Activated CD8-positive, alpha-beta memory T cell treated with anti-CD3 and anti-CD28 coated beads, Interleukin-2, amount 10 ng/mL, durations not matched to agents 7 days and 5 days (primary cell): ENCODE measurements at regions of chr1 and their contacts with region 1.

Region 1: GRCh38 chr1:202154766-202155477 is 5.5 kb downstream of the PTPN7 start:
- DNase-seq: peak; percentile 74
- ATAC-seq: peak; percentile 49
- H3K4me3 Mint-ChIP-seq: no peak overlapping the region
- H3K27ac Mint-ChIP-seq: peak overlapping the region; percentile 8
- H3K4me1 Mint-ChIP-seq: peaks cover 62% of the 10 kb centered on the region
- H3K27me3 Mint-ChIP-seq: no peaks in the 10 kb centered on the region

Region 2: DNA sequence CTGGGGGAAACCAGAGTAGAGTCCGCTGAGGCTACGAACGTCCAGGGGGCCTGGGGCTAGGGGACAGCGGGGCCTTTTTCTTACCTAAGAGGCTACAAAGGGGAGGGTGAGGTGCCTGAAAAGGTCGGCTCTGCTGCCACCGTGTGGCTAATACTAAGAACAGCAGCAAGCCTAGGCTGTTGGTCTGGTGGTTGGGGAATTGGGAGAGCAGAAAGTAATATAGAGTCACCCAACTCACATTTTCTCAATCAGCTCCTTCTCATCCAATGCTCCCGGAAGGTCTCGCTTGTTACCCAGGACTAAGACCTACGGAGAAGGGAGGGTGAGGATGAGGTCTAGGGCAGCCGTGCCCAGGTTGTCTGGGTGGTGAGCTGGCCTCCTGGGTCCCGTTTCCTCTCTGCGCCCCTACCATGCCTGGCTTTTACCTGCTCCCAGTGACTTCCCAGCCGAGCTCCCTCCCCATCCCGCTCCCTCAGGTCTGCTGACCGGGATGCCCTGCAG is 19.7 kb before region 1 on chr1:
- CTCF ChIA-PET with region 1: interaction called, 13 read pairs
- DNase-seq: peak; percentile 64
- ATAC-seq: peak; percentile 87
- H3K4me3 Mint-ChIP-seq: no peak overlapping the region
- H3K27ac Mint-ChIP-seq: no peak overlapping the region
- H3K4me1 Mint-ChIP-seq: peaks cover 4% of the 10 kb centered on the region
- H3K27me3 Mint-ChIP-seq: no peaks in the 10 kb centered on the region

Region 3: GRCh38 chr1:202144402-202145067 is 10.4 kb before region 1 on chr1 and contains the start of gene ARL8A:
- CTCF ChIA-PET with region 1: interaction called, 24 read pairs
- DNase-seq: peak; percentile 79
- ATAC-seq: peak; percentile 84
- H3K4me3 Mint-ChIP-seq: peak within 1 kb of the TSS; percentile 85
- H3K27ac Mint-ChIP-seq: peak within 1 kb of the TSS; percentile 90
- H3K4me1 Mint-ChIP-seq: peaks cover 41% of the 10 kb centered on the region
- H3K27me3 Mint-ChIP-seq: no peaks in the 10 kb centered on the region
- total RNA-seq, gene ARL8A: 50.0 to 68.9 TPM

Region 4: DNA sequence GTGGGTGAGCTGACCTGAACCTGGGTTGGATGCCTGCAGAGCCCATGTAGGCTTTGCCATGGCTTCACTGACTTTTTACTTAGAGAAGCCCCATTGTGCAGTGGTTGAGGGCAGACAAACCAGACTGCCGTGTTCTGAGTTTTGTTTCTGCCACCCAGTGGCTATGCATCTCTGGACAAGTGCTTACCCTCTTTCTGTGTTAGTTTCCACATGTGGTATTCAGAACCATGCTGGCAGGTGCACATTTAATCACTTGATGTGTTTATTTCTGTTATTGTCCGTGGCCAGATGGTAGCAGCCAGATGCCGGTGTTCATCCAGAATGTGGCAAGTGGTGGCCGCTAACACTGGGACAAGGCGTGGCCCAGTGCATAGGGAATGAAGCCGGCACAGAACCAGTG is 15.8 kb after region 1 on chr1:
- CTCF ChIA-PET with region 1: interaction called, 26 read pairs
- DNase-seq: no peak
- ATAC-seq: no peak
- H3K4me3 Mint-ChIP-seq: no peak overlapping the region
- H3K27ac Mint-ChIP-seq: no peak overlapping the region
- H3K4me1 Mint-ChIP-seq: peaks cover 20% of the 10 kb centered on the region
- H3K27me3 Mint-ChIP-seq: no peaks in the 10 kb centered on the region

Region 5: GRCh38 chr1:202176949-202177927 is 22.3 kb after region 1 on chr1:
- CTCF ChIA-PET with region 1: interaction called, 32 read pairs
- DNase-seq: no peak
- ATAC-seq: no peak
- H3K4me3 Mint-ChIP-seq: no peak overlapping the region
- H3K27ac Mint-ChIP-seq: no peak overlapping the region
- H3K4me1 Mint-ChIP-seq: peaks cover 3% of the 10 kb centered on the region
- H3K27me3 Mint-ChIP-seq: no peaks in the 10 kb centered on the region

Region 6: DNA sequence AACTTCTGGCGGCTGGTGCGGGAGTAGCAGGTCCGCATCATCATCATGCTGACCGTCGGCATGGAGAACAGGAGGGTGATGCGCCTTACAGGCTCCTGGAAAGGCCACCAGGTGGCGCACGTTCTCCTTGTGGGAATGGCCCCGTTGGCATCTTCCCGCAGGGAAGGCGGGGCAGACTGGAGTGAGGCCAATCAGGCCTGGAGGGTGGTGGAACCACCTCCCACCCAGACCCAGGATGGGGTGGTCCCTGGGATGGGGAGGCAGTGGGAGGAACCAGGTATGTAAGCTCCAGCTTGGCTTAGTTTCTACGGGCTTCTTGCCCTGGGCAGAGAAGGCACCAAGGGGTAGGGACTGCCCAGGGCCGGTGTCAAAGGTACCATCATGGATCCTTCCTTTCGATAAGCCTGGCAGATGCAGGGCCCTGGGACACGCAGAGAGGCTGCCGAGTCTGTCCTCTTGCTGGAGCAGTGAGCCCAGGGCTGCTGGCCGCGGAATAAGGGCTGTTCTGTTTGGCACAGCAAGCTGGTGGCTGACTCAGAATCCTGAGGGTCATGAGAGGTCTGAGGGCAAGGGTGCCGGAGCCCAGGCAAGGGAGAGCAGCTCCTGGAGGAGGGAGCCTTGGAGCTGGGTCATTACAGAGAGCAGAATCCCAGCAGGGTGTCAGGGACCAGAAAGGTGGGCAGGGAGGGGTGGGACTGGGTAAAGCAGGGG is 30.0 kb after region 1 on chr1:
- CTCF ChIA-PET with region 1: interaction called, 32 read pairs
- DNase-seq: peak; percentile 78
- ATAC-seq: peak; percentile 67
- H3K4me3 Mint-ChIP-seq: no peak overlapping the region
- H3K27ac Mint-ChIP-seq: no peak overlapping the region
- H3K4me1 Mint-ChIP-seq: peaks cover 7% of the 10 kb centered on the region
- H3K27me3 Mint-ChIP-seq: peaks cover 2% of the 10 kb centered on the region

Region 7: DNA sequence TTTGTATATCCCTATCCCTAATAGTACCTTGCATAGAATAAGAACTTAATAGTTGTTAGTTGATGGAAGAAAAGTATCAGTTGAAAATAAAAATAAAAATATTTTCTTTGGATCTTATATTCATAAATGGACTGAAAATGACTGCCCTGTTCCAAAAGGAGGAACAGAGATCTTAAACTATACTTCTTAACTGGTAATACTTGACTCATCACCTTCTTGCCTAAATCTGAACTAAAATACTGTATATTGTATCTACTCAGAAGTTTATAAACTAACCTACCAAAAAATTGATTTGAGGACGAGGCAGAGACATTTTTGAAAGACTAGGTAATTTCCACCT is 376.5 kb after region 1 on chr1:
- CTCF ChIA-PET with region 1: no interaction called
- DNase-seq: no peak
- ATAC-seq: no peak
- H3K4me3 Mint-ChIP-seq: no peak overlapping the region
- H3K27ac Mint-ChIP-seq: no peak overlapping the region
- H3K4me1 Mint-ChIP-seq: no peaks in the 10 kb centered on the region
- H3K27me3 Mint-ChIP-seq: no peaks in the 10 kb centered on the region